Naive thymus-derived CD4-positive, alpha-beta T cell (primary cell): ENCODE measurements at regions of chr1 and their contacts with region 1.

Region 1: DNA sequence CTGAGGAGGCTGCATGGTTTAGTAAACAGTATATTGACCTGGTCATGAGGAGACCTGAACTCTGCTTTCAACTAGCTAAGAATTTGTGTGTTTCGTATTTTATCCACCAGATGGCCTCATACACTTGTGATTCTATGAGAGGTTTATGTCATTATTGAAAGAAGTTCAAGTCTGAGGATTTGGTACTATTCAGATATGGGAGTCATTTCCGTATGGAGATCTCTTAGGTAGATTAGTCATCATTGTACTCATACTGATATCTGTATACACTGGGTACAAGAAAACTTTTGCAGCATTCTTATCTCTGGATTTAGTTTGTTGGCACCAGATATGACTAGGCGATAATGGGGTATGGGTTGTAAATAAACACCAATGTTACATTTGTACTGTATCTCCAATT is 26.6 kb downstream of the ATF6 start:
- DNase-seq: peak in 7 of 9 donors; percentile 18 to 56 (median 41)
- ATAC-seq: peak; percentile 76
- H3K4me3 ChIP-seq: no peak overlapping the region
- H3K4me3 Mint-ChIP-seq: no peak overlapping the region
- H3K27ac ChIP-seq: no peak overlapping the region
- H3K27ac Mint-ChIP-seq: no peak overlapping the region
- H3K4me1 ChIP-seq: no peaks in the 10 kb centered on the region
- H3K4me1 Mint-ChIP-seq: peaks cover 0 to 26% (median 5%) of the 10 kb centered on the region in 7 donors
- H3K27me3 ChIP-seq: no peaks in the 10 kb centered on the region
- H3K27me3 Mint-ChIP-seq: no peaks in the 10 kb centered on the region

Region 2: DNA sequence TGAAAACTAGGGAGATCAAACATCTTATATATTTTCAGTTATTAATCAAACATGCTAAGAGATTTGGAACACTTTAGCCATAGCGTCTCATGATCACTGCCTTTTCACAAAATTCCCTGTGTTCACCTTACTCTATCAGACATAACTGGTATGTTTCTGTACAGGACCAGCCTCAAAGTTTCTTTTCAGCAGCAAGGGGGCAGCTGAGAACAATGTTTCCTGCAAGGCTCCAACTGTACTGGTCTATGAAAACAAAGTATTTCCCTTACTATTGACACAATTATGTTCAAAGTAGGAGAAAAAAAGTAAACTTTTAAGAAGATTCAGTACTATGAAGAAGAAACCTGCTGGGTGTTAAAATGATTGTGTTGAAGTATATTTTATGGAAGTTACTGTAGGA is 71.8 kb after region 1 on chr1:
- CTCF ChIA-PET with region 1: interaction called, 7 read pairs
- POLR2A ChIA-PET with region 1: no interaction called
- intact Hi-C with region 1: loop called in 1 of 2 experiments (anchors 10 kb)
- DNase-seq: peak in 7 of 9 donors; percentile 2 to 46 (median 28)
- ATAC-seq: peak; percentile 37
- H3K4me3 ChIP-seq: no peak overlapping the region
- H3K4me3 Mint-ChIP-seq: no peak overlapping the region
- H3K27ac ChIP-seq: no peak overlapping the region
- H3K27ac Mint-ChIP-seq: peak overlapping the region in 2 of 9 donors; percentile 5 to 12
- H3K4me1 ChIP-seq: no peaks in the 10 kb centered on the region
- H3K4me1 Mint-ChIP-seq: no peaks in the 10 kb centered on the region
- H3K27me3 ChIP-seq: no peaks in the 10 kb centered on the region
- H3K27me3 Mint-ChIP-seq: no peaks in the 10 kb centered on the region

Region 3: DNA sequence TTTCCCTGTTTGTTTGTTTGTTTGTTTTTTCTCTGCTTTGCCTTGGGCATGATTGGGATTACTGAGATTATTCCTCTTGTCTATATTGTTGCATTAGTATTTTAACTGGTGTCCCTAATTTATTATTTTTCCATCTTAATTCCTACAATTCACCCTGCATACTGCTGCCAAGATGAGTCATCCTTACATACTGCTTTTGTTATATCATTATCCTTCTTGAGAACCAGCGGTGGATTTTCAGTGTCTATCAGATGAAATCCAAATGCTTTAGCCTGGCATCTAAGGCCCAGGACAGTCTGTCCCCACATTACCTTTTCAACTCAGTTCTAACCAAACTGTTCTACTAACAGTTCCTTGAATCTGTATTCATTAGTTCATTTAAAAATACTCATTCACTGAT is 129.2 kb after region 1 on chr1:
- CTCF ChIA-PET with region 1: no interaction called
- POLR2A ChIA-PET with region 1: no interaction called
- intact Hi-C with region 1: no loop called
- DNase-seq: no peak
- ATAC-seq: no peak
- H3K4me3 ChIP-seq: no peak overlapping the region
- H3K4me3 Mint-ChIP-seq: peak overlapping the region in 2 of 10 donors; percentile 8 to 15
- H3K27ac ChIP-seq: no peak overlapping the region
- H3K27ac Mint-ChIP-seq: peak overlapping the region in 3 of 9 donors; percentile 9 to 34 (median 17)
- H3K4me1 ChIP-seq: peaks cover 15% of the 10 kb centered on the region in 2 donors
- H3K4me1 Mint-ChIP-seq: peaks cover 10 to 83% (median 60%) of the 10 kb centered on the region in 7 donors
- H3K27me3 ChIP-seq: no peaks in the 10 kb centered on the region
- H3K27me3 Mint-ChIP-seq: no peaks in the 10 kb centered on the region

Region 4: GRCh38 chr1:162023547-162024501 is 231.1 kb after region 1 on chr1 and contains the start of gene OLFML2B:
- CTCF ChIA-PET with region 1: interaction called, 23 read pairs
- POLR2A ChIA-PET with region 1: no interaction called
- intact Hi-C with region 1: loop called (anchors 1 kb)
- DNase-seq: peak; percentile 15 to 66 (median 49)
- ATAC-seq: peak; percentile 88
- H3K4me3 ChIP-seq: peak within 1 kb of the TSS; percentile 80
- H3K4me3 Mint-ChIP-seq: peak within 1 kb of the TSS; percentile 89 to 99 (median 94)
- H3K27ac ChIP-seq: no peak within 1 kb of the TSS
- H3K27ac Mint-ChIP-seq: peak within 1 kb of the TSS in 3 of 9 donors; percentile 2 to 55 (median 51)
- H3K4me1 ChIP-seq: peaks cover 0 to 4% of the 10 kb centered on the region in 2 donors
- H3K4me1 Mint-ChIP-seq: peaks cover 6 to 13% (median 9%) of the 10 kb centered on the region in 7 donors
- H3K27me3 ChIP-seq: peaks cover 0 to 3% of the 10 kb centered on the region in 2 donors
- H3K27me3 Mint-ChIP-seq: peaks cover 33 to 54% (median 34%) of the 10 kb centered on the region in 5 donors
- total RNA-seq, gene OLFML2B: 0.27 to 0.47 (median 0.35) TPM in 3 of 5 experiments, not detected in the others

Region 5: GRCh38 chr1:162040681-162041080 is 247.9 kb after region 1 on chr1:
- CTCF ChIA-PET with region 1: interaction called, 136 read pairs
- POLR2A ChIA-PET with region 1: no interaction called
- intact Hi-C with region 1: loop called (anchors 1 kb)
- DNase-seq: no peak
- ATAC-seq: no peak
- H3K4me3 ChIP-seq: no peak overlapping the region
- H3K4me3 Mint-ChIP-seq: no peak overlapping the region
- H3K27ac ChIP-seq: no peak overlapping the region
- H3K27ac Mint-ChIP-seq: peak overlapping the region in 1 of 9 donors; percentile 12
- H3K4me1 ChIP-seq: no peaks in the 10 kb centered on the region
- H3K4me1 Mint-ChIP-seq: peaks cover 0 to 4% (median 0%) of the 10 kb centered on the region in 7 donors
- H3K27me3 ChIP-seq: no peaks in the 10 kb centered on the region
- H3K27me3 Mint-ChIP-seq: peaks cover 5 to 20% (median 10%) of the 10 kb centered on the region in 5 donors

Region 6: DNA sequence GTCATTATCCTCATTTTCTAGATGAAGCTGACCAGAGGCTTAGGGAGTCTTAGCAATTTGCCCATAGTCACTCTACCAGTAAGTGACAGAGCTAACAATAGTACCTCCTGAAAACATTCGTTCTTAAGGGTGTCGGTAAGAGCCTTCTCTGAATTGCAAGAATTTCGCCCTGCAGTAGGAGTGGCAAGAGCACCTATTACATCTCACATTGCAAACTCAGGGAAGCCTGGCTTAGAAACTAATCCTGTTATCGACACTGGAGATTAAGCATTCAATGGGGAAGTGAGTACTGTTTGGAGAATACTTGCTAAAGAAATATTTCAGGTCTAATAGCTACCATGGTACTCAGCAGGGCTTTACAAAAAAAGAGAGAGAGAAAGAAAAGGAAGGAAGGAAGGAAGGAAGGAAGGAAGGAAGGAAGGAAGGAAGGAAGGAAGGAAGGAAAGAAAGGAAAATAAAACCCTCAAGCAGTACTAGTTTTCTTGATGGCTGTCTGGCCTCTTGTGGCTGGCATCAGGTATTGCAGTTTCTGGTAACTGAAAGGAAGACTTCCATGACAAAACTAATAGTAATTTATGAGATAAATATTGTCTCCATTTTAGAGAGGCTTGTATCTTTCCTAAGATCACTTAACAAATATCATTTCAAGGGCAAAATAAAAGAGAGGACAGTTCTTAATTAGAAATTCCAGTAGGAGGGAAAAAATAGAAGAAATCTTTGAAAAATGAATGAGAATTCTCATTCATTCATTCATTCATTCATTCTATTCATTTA is 599.2 kb after region 1 on chr1:
- CTCF ChIA-PET with region 1: no interaction called
- POLR2A ChIA-PET with region 1: no interaction called
- intact Hi-C with region 1: loop called in 1 of 2 experiments (anchors 5 kb)
- DNase-seq: peak in 1 of 9 donors; percentile 9
- ATAC-seq: no peak
- H3K4me3 ChIP-seq: no peak overlapping the region
- H3K4me3 Mint-ChIP-seq: no peak overlapping the region
- H3K27ac ChIP-seq: no peak overlapping the region
- H3K27ac Mint-ChIP-seq: no peak overlapping the region
- H3K4me1 ChIP-seq: no peaks in the 10 kb centered on the region
- H3K4me1 Mint-ChIP-seq: peaks cover 0 to 19% (median 1%) of the 10 kb centered on the region in 7 donors
- H3K27me3 ChIP-seq: no peaks in the 10 kb centered on the region
- H3K27me3 Mint-ChIP-seq: peaks cover 11 to 30% (median 22%) of the 10 kb centered on the region in 5 donors